AG04449 (cell line): ENCODE measurements at regions of chr17 and their contacts with region 1.

Region 1: GRCh38 chr17:81385320-81386111 is 9.7 kb upstream of the BAHCC1 start:
- DNase-seq: no peak
- H3K4me3 ChIP-seq: no peak overlapping the region
- CTCF ChIP-seq: no peak

Region 2: DNA sequence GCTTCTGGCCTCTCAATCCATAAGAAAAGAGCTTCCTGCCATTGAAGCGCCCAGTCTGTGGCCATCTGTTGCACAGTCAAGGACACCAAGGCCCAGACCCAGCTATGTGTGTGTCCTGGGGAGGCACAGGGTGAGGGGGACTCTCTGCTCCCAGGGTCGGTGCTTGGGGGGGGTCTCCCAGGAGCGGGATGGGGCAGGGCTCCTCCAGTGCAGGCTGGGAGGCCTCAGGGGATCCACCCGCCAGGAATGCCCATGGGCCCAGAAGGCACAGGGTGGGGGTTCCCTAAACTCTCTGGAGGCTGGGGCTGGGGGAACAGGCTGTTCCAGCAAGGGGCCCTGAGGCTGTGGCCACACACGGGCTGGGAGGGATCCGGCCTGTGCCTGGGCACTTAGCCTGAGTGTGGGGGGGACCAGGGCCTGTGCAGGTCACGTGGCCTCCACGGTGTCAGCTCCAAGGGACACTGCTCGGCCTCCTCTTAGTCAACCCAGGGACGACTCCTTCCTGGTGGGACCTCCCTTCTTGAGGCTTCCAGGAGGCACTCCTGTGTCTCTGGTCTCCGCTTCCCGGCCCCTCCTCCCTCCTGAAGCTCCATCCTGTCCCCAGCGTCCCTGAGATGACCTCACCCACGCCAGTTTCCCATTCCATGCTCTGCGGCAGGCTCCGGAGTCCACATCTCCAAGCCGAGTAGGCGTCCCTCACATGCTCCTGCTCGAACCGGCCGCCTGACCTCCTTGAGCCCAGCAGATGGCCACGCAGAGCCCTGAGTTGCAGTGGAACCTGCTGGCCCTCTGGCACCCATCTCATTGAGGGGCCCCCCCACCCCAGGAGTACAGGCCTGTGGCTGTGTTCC is 13.4 kb before region 1 on chr17:
- CTCF ChIA-PET with region 1: interaction called, 14 read pairs
- POLR2A ChIA-PET with region 1: no interaction called
- DNase-seq: no peak
- H3K4me3 ChIP-seq: no peak overlapping the region
- CTCF ChIP-seq: peak; percentile 80

Region 3: GRCh38 chr17:81409190-81409935 is 23.8 kb after region 1 on chr17:
- CTCF ChIA-PET with region 1: no interaction called
- POLR2A ChIA-PET with region 1: no interaction called
- DNase-seq: no peak
- H3K4me3 ChIP-seq: no peak overlapping the region
- CTCF ChIP-seq: no peak

Region 4: DNA sequence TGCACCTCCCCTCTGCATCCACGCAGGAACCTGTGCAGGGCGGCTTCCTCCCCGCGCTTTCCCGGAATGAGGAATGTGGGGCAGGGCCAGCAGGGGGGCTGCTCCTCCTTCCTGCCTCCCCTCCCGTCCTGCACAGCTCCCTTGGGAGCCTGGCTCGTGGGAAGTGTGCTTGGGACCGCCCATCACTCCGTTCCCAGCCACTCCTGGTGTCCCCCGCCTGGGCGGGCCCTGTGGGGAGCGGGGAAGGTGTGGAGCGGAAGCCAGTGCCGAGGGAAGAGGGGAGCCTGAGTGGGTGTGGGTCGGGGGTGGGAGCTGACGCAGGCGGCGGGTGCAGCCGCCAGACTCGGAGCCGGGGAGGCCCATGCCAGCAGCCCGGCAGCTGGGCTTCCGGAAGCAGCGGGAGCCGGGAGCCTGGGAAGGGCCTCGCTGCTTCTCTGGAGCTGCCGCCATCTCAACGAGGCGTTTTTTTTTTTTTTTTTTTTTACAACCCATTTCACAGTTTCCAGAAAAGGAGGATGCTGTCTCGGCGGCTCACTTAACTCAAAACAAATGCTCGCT is 33.9 kb after region 1 on chr17:
- CTCF ChIA-PET with region 1: no interaction called
- POLR2A ChIA-PET with region 1: no interaction called
- DNase-seq: peak; percentile 84
- H3K4me3 ChIP-seq: peak overlapping the region; percentile 41
- CTCF ChIP-seq: no peak